AG04449 (cell line): ENCODE measurements at regions of chr21 and their contacts with region 1.

Region 1: GRCh38 chr21:33199516-33200217 is 30.1 kb upstream of the IFNAR2 start:
- DNase-seq: peak; percentile 72
- H3K4me3 ChIP-seq: no peak overlapping the region
- CTCF ChIP-seq: peak; percentile 66

Region 2: GRCh38 chr21:32055305-32055704 is 1144.4 kb before region 1 on chr21:
- CTCF ChIA-PET with region 1: no interaction called
- POLR2A ChIA-PET with region 1: no interaction called
- DNase-seq: no peak
- H3K4me3 ChIP-seq: no peak overlapping the region
- CTCF ChIP-seq: no peak

Region 3: DNA sequence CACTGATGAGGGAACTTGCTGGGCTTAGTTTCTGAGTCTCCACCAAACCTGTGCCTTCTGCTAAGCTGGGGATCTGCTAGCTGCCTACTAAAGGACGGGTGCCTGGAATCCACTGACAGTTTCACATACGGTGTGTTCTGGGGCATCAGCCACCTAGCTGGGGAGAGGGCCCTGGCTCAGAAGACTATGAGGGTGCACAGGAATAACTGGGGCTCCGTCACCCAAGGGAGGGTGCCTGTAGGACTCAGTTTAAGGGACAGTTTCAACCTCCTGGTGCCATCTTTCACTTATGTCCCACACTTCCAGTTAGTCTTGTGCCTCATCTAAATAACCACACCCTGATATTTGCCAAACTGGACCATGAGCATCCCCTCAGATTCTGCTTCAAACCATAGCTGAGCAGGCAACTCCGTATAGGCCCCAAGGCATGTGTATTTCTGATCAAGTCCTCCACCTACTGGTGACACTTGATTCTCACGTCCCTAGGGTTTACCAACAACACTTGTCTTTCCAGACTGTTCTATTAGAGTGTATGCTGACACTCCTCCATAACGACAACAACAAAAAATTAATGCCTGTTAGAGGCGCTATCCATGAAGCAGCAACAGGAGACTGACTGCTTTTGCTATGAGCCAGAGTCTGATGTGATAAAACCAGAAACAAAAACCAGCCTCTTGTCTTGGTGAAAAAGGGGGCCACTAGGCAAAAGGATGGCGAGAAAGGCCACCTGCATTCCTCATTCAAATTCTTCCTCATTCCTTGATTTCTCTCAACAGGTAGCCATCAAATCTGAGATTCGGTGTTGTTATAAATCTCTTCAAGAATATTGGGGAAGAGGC is 373.1 kb before region 1 on chr21:
- CTCF ChIA-PET with region 1: interaction called, 70 read pairs
- POLR2A ChIA-PET with region 1: no interaction called
- DNase-seq: no peak
- H3K4me3 ChIP-seq: no peak overlapping the region
- CTCF ChIP-seq: peak; percentile 55

Region 4: DNA sequence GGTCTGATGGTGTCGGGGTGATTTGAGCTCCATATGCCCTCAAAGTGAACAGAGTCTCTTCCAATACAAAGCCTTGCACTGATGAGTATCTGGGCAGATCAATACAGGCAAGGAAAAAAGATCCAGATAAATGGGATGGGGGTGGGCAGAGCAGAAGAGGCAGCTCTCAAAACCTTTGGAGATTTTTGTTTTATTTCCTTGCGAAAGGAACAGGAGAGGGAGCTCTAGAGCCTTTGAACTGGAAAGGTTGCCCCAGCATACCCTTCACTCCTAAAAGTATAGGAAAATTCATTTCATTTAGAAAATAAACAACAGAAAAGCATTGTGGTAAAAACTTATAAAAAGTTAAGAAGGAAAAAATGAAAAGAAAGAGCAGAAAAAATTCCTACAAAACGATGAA is 205.4 kb before region 1 on chr21:
- CTCF ChIA-PET with region 1: interaction called, 81 read pairs
- POLR2A ChIA-PET with region 1: no interaction called
- DNase-seq: no peak
- H3K4me3 ChIP-seq: no peak overlapping the region
- CTCF ChIP-seq: peak; percentile 25

Region 5: GRCh38 chr21:33135925-33136324 is 63.7 kb before region 1 on chr21:
- CTCF ChIA-PET with region 1: no interaction called
- POLR2A ChIA-PET with region 1: no interaction called
- DNase-seq: no peak
- H3K4me3 ChIP-seq: no peak overlapping the region
- CTCF ChIP-seq: no peak

Region 6: GRCh38 chr21:33374450-33375096 is 174.9 kb after region 1 on chr21:
- CTCF ChIA-PET with region 1: interaction called, 24 read pairs
- POLR2A ChIA-PET with region 1: no interaction called
- DNase-seq: no peak
- H3K4me3 ChIP-seq: no peak overlapping the region
- CTCF ChIP-seq: peak; percentile 57

Region 7: DNA sequence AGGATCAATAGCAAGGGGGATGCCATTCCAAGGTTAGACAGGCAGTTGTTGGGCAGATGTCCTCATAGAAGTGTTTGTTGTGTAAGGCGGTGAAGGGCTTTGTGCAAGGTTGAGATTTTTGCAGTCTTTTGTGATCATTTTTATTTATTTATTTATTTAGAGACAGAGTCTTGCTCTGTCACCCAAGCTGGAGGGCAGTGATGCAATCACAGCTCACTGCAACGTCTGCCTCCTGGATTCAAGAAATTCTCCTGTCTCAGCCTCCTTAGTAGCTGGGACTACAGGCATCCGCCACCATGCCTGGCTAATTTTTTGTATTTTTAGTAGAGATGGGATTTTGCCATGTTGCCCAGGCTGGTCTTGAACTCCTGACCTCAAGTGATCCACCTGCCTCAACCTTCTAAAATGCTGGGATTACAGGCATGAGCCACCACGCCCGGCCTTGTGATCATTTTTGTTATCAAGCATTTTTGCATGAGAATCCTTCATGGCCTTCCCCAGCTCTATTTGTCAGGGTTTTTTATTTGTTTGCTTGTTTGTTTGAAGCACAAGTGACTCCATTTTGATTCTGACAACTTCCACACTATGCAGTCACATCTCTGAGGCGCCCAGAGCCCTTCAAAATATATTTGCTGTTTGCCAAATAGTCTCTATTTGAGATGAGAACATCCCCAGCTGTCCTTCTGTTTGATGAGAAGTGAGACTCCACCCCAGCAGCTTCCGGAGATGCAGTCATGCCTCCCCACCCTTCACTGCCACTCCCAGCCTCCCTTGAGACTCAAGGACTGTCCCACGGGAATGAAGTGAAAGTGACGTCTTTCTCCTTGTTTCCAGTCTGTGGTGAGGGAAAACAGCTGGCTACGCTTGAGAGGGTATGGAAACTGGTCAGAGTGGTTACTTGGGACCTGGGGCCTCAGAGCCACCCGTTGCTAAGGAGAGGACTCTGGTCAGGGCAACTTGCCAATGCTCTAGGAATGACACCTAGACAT is 242.1 kb after region 1 on chr21:
- CTCF ChIA-PET with region 1: interaction called, 91 read pairs
- POLR2A ChIA-PET with region 1: no interaction called
- DNase-seq: peak; percentile 33
- H3K4me3 ChIP-seq: no peak overlapping the region
- CTCF ChIP-seq: no peak